GM13976 (cell line): ENCODE measurements at regions of chr5 and their contacts with region 1.

Region 1: DNA sequence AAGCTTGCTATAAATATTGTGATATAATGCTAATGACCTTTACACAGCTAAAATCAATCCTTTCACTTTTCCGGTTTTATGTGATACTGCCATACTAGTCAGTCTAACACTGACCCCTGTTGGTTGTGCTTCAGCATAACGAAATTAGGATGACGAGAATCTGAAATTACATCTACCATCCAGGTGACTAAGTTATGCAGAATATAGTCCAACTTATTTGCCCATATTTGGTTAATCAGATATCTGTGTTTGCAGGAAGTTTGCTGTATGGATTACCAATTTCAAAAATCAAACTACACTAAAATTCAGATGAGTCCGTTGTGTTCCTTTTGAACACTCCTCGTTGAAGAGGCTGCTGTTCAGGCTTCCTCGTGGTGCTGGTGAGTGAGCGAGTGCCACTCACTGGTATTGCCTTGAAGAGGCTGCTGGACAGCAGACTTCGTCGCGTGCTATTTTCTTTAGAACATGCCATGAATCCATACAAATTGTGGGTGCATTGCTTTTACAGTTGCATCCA is 32.5 kb downstream of the TENT4A start:
- DNase-seq: peak; percentile 75
- CTCF ChIP-seq: peak; percentile 69

Region 2: DNA sequence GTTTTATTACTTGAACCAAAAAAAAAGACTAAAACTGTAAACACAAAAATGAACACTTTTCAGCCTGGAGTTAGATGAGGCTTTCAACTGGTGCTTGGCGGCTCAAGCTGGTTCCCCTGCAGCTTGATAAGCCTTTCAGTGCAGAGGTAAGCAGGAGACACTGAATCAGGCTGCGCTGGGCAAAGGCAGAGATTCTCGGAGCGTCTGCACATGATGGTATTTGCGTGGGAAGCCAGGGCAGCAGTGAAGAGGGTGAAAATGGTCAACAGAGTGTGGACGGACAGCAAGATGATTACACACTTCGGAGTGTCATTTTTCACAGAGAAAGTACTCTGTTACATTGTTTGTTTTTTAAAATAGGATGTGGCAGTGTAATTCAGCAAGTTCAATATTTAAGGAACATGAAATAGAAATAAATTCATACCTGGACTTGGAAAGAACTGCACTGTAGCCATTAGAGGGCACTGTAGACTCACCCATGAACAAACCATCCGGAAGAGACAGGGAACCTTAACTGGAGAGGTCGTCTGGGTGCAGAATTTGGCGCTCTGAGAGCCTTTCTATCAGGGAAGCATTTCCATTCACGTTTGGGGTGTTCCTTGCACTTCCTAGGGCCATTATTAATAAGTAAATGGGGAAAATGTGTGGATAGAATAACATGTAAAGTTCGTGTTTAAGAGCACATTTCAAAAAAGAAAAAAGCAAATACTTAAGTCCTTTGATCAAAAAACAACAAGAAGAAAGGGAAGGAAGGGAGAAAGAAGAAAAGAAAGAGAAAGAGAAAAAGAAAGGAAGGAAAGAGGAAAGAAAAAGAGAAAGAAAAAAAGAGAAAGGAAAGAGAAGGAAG is 1253.5 kb before region 1 on chr5:
- in situ Hi-C with region 1: loop called (anchors 25 kb)
- DNase-seq: peak; percentile 71
- CTCF ChIP-seq: peak; percentile 67

Region 3: DNA sequence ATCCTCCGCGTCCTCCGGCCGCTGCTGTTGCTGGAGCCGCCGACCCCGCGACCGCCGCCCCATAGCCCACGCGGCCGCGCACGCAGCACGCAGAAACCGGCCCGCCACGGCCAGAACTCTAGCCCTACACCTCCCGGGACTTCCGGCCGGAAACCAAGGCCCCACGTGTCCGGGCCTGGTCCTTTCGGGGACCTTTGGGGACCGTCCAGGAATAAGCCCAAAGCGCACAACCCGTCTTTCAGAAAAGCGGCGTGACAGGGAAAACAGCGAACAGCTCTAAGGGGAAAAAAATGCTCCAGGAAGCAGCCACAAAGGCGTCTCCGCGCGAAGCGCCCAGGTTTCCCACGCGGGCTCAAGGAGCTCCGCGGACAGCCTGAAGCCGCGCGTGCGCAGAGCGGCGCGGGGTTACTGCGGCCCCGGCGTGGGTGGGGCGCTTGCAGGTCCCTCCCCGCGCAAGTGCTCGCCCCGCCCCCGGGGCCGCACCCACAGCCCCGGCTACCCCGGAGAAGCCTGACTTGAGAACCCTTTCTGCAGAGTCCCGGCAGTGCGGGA is 112.8 kb before region 1 on chr5 and contains the starts of genes NSUN2 and SRD5A1:
- in situ Hi-C with region 1: loop called (anchors 25 kb)
- DNase-seq: peak; percentile 99
- CTCF ChIP-seq: no peak